Right ventricle myocardium inferior (tissue), 1 donor: ENCODE measurements at regions of chr11 and their contacts with region 1.

Region 1: DNA sequence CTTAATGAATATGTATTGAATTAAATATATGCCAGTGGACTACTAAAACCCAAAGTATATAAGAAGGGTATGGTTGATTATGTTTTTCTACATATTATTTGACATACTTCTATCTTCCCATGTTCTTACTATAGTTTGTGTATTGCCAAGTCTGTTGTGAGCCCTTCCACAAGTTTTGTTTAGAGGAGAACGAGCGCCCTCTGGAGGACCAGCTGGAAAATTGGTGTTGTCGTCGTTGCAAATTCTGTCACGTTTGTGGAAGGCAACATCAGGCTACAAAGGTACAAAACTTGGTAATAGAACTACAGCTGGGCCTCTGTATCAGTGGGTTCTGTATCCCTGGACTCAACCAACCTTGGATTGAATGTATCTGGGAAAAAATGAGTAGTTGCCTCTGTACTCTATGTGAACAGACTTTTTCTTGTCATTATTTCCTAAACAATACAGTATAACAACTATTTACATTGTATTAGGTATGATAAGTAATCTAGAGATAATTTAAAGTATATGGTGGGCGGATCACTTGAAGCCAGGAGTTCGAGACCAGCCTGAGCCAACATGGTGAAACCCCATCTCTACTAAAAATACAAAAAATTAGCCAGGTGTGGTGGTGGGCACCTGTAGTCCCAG is 38.7 kb upstream of the TTC36 start:
- DNase-seq: no peak
- ATAC-seq: no peak

Region 2: GRCh38 chr11:118295834-118296454 is 192.7 kb before region 1 on chr11:
- intact Hi-C with region 1: loop called (anchors 5 kb)
- DNase-seq: no peak
- ATAC-seq: no peak